ENCODE measurements at regions of chr12 and their contacts with region 1.

Region 1: GRCh38 chr12:52213512-52214420 is 19.3 kb upstream of the KRT7 start:
- DNase-seq: peak; percentile 76
- CTCF ChIP-seq: peak; percentile 85

Region 2: DNA sequence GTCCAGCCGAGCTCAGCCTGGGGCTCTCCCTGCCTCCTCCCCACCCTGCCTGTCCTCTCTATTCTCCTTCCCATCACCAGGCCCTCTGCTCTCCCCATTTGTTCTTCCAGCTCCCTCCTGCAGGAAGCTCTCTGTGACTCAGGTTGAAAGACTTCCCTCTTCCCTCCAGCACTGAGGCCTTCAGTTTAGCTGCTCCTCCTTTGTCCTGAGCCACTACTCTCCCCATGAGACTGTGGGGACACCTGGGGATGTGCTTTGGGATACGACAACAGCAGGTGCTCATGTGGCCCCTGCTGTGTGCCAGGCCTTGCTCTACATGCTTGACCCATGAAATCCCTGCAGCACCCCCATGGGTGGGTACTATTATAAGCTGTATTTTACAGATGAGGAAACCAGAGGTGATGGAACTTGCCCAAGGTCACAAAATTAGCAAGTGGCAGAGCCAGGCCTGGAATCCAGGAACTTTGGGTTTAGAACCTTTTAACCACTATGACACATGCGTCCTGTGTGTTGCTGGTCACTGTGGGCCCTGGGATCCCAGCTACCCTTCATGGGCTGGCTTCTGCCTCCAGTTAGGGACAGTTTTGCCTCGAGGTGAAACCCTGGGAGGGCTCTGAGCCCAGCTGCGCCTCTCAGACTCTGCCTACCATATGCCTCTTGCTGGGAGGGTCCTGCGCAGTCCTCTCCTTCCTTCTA is 27.5 kb before region 1 on chr12:
- CTCF ChIA-PET with region 1: interaction called, 10 read pairs
- POLR2A ChIA-PET with region 1: no interaction called
- DNase-seq: no peak
- CTCF ChIP-seq: no peak

Region 3: GRCh38 chr12:52390739-52391617 is 177.2 kb after region 1 on chr12:
- CTCF ChIA-PET with region 1: no interaction called
- POLR2A ChIA-PET with region 1: no interaction called
- DNase-seq: no peak
- CTCF ChIP-seq: peak; percentile 15

Measured in GM10248 (cell line).